Pancreas (tissue), 10 donors: ENCODE measurements at regions of chr5 and their contacts with region 1.

Region 1: GRCh38 chr5:134586866-134587524 is 45.6 kb downstream of the SAR1B start:
- DNase-seq: peak; percentile 74 to 95 (median 87)
- ATAC-seq: peak; percentile 94 to 96 (median 96)
- H3K4me3 ChIP-seq: no peak overlapping the region
- H3K27ac ChIP-seq: no peak overlapping the region
- H3K4me1 ChIP-seq: no peaks in the 10 kb centered on the region
- H3K27me3 ChIP-seq: no peaks in the 10 kb centered on the region
- CTCF ChIP-seq: peak; percentile 43 to 76 (median 62)

Region 2: DNA sequence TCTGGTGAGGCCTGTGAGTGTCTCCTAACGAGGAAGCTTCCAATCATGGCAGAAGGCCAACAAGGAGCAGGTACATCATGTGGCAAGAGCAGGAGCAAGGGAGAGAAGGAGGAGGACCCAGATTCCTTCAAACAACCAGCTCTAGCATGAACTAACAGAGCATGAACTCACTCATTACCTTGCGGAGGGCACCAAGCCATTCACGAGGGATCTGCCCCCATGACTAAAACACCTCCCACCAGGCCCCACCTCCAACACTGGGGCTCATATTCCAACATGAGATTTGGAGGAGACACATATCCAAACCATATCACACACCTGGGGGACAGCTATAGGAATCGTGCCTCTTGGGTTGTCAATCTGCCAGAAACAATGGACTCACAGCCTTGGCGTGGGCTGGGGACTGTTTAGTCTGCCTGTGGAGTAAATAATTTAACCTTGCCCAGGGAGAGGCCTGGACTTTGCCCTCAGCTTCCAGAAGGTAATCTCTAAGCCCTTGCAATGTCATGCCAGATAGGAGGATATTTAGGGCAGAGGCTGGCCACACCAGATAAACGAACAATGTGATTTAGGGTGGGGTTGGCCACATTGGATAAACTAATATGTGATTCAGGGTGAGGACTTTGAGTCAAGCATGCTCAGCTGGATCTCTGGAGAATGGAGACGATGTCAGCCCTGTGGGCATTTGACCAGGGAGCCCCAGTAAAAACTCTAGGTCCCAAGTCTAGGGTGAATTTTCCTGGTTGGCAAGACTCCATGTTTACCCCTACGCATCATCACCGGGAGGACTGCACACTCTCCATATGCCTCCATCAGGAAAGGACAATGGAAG is 568.6 kb before region 1 on chr5:
- intact Hi-C with region 1: no loop called
- DNase-seq: peak in 5 of 6 donors; percentile 54 to 77 (median 56)
- ATAC-seq: peak; percentile 83 to 92 (median 91)
- H3K4me3 ChIP-seq: no peak overlapping the region
- H3K27ac ChIP-seq: peak overlapping the region in 3 of 4 donors; percentile 26 to 74 (median 58)
- H3K4me1 ChIP-seq: peaks cover 6 to 27% (median 20%) of the 10 kb centered on the region in 3 donors
- H3K27me3 ChIP-seq: no peaks in the 10 kb centered on the region
- CTCF ChIP-seq: no peak

Region 3: GRCh38 chr5:134304311-134304710 is 282.7 kb before region 1 on chr5:
- intact Hi-C with region 1: loop called (anchors 5 to 10 kb)
- DNase-seq: no peak
- ATAC-seq: no peak
- H3K4me3 ChIP-seq: no peak overlapping the region
- H3K27ac ChIP-seq: no peak overlapping the region
- H3K4me1 ChIP-seq: peaks cover 0 to 3% (median 0%) of the 10 kb centered on the region in 3 donors
- H3K27me3 ChIP-seq: no peaks in the 10 kb centered on the region
- CTCF ChIP-seq: no peak